ENCODE measurements at regions of chr17 and their contacts with region 1.

Region 1: GRCh38 chr17:78993241-78993956 is 13.7 kb upstream of the LGALS3BP start:
- DNase-seq: peak; percentile 94
- H3K4me3 ChIP-seq: no peak overlapping the region; a peak in 1 of 4 replicates
- H3K27ac ChIP-seq: no peak overlapping the region; a peak in 1 of 4 replicates
- H3K4me1 ChIP-seq: peaks cover 0 to 10% of the 10 kb centered on the region in 2 experiments; a peak in 1 of 4 replicates
- H3K27me3 ChIP-seq: no peaks in the 10 kb centered on the region
- CTCF ChIP-seq: peak; percentile 98
- EP300 ChIP-seq: no peak
- RAD21 ChIP-seq: peak; percentile 71

Region 2: GRCh38 chr17:78979780-78980623 is 13.4 kb before region 1 on chr17 and contains the start of gene LGALS3BP:
- CTCF ChIA-PET with region 1: interaction called, 133 read pairs
- POLR2A ChIA-PET with region 1: interaction called, 6 read pairs
- DNase-seq: peak; percentile 97
- H3K4me3 ChIP-seq: peak within 1 kb of the TSS; percentile 44 to 68
- H3K27ac ChIP-seq: peak within 1 kb of the TSS; percentile 56 to 98
- H3K4me1 ChIP-seq: peaks cover 20 to 55% of the 10 kb centered on the region in 2 experiments; a peak in 3 of 4 replicates
- H3K27me3 ChIP-seq: no peaks in the 10 kb centered on the region
- CTCF ChIP-seq: no peak
- EP300 ChIP-seq: peak in 1 of 2 experiments; percentile 87; a peak in 2 of 4 replicates
- RAD21 ChIP-seq: peak; percentile 22
- polyA plus RNA-seq, gene LGALS3BP: 272 and 579 TPM in 2 replicates

Region 3: DNA sequence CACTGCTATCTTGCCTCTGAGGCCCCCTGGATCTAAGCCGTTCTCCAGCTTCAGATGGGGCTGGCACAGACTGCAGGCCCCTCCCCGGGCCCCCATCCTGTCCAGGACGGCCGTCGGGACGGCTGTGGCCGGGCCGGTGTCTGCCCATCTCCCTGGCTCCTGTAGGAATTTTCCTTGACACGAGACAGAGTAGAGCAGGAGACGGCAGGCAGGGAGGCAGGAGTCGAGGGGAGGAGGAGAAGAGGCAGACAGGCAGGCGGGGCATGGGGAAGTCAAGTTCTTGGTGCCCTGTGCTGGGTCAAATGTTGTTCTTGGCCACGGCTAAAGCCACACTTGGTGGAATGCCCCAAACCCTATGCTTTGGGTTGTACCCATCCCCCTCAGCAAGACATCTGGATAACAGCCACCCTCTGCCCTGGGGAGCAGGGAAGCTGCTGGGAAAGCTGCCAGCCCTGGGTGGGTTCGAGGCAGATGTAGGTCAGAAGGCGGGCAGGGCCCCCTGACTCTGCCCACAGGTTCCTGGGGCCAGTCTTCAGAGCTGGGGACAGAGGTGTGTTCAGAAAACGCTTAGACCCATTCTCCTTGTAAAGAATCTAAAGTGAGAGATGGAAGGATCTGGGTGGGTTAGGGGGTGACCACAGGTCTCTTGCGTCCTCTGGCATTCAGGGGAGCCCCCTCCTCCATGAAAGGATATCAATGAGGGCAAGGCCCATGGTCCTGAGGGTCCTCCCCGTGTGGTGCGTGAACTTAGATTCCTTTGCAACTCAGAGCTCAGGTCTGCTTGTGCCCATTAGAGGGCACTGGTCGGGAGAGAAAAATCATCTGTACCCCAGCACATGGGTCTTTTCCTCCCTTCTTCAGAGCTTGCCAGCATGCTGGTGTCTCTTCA is 34.8 kb after region 1 on chr17:
- CTCF ChIA-PET with region 1: interaction called, 10 read pairs
- POLR2A ChIA-PET with region 1: no interaction called
- DNase-seq: peak; percentile 92
- H3K4me3 ChIP-seq: peak overlapping the region in 1 of 2 experiments; percentile 19; a peak in 1 of 4 replicates
- H3K27ac ChIP-seq: peak overlapping the region; percentile 51 to 92; a peak in 3 of 4 replicates
- H3K4me1 ChIP-seq: peaks cover 33 to 59% of the 10 kb centered on the region in 2 experiments
- H3K27me3 ChIP-seq: no peaks in the 10 kb centered on the region
- CTCF ChIP-seq: peak; percentile 56
- EP300 ChIP-seq: peak; percentile 32 to 88; a peak in 3 of 4 replicates
- RAD21 ChIP-seq: peak; percentile 28

Region 4: GRCh38 chr17:79305768-79306423 is 312.5 kb after region 1 on chr17:
- CTCF ChIA-PET with region 1: no interaction called
- POLR2A ChIA-PET with region 1: no interaction called
- DNase-seq: peak; percentile 95
- H3K4me3 ChIP-seq: no peak overlapping the region
- H3K27ac ChIP-seq: peak overlapping the region in 1 of 2 experiments; percentile 91; a peak in 2 of 4 replicates
- H3K4me1 ChIP-seq: peaks cover 0 to 24% of the 10 kb centered on the region in 2 experiments; a peak in 2 of 4 replicates
- H3K27me3 ChIP-seq: 0 out of 2 replicates have a peak, but pooled peaks cover 9% of the 10 kb centered on the region
- CTCF ChIP-seq: no peak
- EP300 ChIP-seq: peak in 1 of 2 experiments; percentile 65; a peak in 2 of 4 replicates
- RAD21 ChIP-seq: no peak

Measured in SK-N-SH (cell line).